Activated T-helper 1 cell treated with anti-CD3 and anti-CD28 coated beads, Interleukin-12 subunit alpha, Interleukin-12 subunit beta, Interleukin-2, Interleukin-4 antibody, amounts not matched to agents 30 ng/mL and 10 ng/mL and 1 ng/mL, durations not matched to agents 14 hours and 24 hours and 36 hours (primary cell): ENCODE measurements at regions of chr1 and their contacts with region 1.

Region 1: GRCh38 chr1:154386643-154387352 is 18.3 kb upstream of the IL6R start:
- DNase-seq: peak; percentile 29
- H3K4me3 Mint-ChIP-seq: peak overlapping the region; percentile 64
- H3K27ac Mint-ChIP-seq: peak overlapping the region; percentile 92
- H3K4me1 Mint-ChIP-seq: peaks cover 20% of the 10 kb centered on the region
- H3K27me3 Mint-ChIP-seq: no peaks in the 10 kb centered on the region

Region 2: DNA sequence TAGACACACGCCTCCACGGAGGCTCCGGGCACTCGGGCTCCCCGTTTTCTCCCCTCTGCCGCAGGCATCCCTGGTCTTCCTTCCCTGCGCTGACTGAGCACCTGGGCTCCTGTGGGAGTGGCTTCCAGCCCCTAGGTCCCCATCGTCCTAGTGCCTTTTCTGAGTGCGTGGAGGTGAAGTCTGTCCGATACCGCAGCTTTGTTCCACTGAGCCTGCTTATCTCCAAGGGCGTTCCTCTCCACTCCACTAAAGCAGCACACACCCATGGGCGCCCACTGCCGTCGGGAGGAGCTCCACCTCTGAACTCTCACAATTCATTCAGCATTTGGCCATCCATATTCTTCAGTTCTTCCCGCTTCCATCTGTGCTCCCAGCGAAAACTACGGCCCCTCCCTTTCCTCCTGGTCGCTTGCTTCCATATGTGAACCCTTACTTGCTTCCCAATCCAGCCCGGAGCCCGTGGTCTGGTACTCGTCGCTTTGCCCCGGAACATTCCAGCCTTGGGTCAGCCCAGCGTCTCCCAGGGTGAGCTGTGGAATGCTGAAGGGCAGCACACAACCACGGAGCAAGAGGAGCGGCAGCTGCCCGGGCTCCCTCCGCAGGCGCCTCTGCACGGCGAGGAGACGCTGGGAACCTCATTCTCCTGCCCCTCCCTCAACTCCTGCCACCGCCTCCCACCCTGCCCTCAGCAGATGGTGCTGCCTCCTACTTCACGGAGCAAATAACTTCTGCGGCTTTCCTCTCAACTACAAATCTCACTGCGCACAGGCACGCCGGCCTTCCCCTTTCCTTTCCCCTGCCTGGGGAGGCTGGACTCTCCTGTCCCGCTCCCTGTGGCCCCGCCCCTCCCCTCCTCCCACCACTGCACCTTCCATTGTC is 34.0 kb before region 1 on chr1:
- intact Hi-C with region 1: loop called (anchors 5 kb)
- DNase-seq: no peak
- H3K4me3 Mint-ChIP-seq: peak overlapping the region; percentile 77
- H3K27ac Mint-ChIP-seq: peak overlapping the region; percentile 29
- H3K4me1 Mint-ChIP-seq: peaks cover 22% of the 10 kb centered on the region
- H3K27me3 Mint-ChIP-seq: peaks cover 5% of the 10 kb centered on the region